ENCODE measurements at regions of chr11 and their contacts with region 1.

Region 1: GRCh38 chr11:2419638-2420501 is 19.3 kb downstream of the TSSC4 start:
- DNase-seq: peak; percentile 92
- H3K4me3 ChIP-seq: no peak overlapping the region
- H3K27ac ChIP-seq: no peak overlapping the region
- H3K4me1 ChIP-seq: peaks cover 6 to 21% (median 14%) of the 10 kb centered on the region in 6 donors
- H3K27me3 ChIP-seq: peaks cover 0 to 39% (median 5%) of the 10 kb centered on the region in 7 donors
- CTCF ChIP-seq: peak; percentile 73 to 94 (median 87)
- POLR2A ChIP-seq: no peak

Region 2: GRCh38 chr11:2196970-2197770 is 222.7 kb before region 1 on chr11:
- intact Hi-C with region 1: loop called (anchors 2 kb)
- DNase-seq: peak; percentile 94
- H3K4me3 ChIP-seq: no peak overlapping the region
- H3K27ac ChIP-seq: no peak overlapping the region
- H3K4me1 ChIP-seq: peaks cover 0 to 16% (median 4%) of the 10 kb centered on the region in 6 donors
- H3K27me3 ChIP-seq: peaks cover 0 to 17% (median 7%) of the 10 kb centered on the region in 7 donors
- CTCF ChIP-seq: peak; percentile 81 to 96 (median 94)
- POLR2A ChIP-seq: no peak

Measured in spleen (tissue), 13 donors.